Dorsolateral prefrontal cortex (tissue), 120 donors: ENCODE measurements at regions of chr20 and their contacts with region 1.

Region 1: DNA sequence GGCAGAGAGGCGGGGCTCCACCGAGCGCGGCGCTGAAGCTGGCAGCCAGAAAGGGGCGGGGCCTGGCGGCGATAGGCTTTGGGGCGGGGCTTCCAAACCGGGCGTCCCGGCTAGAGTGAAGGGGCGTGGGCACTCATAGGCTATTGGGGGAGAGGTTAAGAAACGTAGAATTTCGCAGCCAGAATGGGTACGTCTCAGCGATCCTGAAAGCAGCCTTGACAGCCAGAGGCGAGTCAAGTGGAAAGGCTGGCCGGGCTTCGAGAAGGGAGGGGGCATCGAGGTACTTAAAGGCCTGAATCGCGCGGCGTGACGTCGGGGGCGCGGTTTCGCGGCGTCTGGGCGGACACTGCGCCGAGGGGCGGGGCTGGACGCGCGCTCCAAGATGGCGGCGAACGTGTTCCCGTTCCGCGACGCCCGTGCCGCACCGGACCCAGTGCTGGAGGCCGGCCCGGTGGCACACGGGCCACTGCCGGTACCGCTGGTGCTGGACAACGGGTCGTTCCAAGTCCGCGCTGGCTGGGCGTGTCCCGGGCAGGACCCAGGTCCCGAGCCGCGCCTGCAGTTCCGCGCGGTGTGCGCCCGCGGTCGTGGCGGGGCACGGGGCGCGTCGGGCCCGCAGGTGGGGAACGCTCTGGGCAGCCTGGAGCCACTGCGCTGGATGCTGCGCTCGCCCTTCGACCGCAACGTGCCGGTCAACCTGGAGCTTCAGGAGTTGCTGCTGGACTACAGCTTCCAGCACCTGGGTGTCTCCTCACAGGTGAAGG is at the start of gene ACTR5:
- DNase-seq: peak; percentile 81 to 92 (median 89)
- H3K4me3 ChIP-seq: peak within 1 kb of the TSS; percentile 47 to 97 (median 89)
- H3K27ac ChIP-seq: peak within 1 kb of the TSS in 57 of 59 donors; percentile 16 to 96 (median 85)
- H3K27me3 ChIP-seq: peaks cover 0 to 5% (median 0%) of the 10 kb centered on the region in 45 donors
- CTCF ChIP-seq: peak in 15 of 56 donors; percentile 0 to 46 (median 28)
- total RNA-seq, gene ACTR5: 7.0 to 13.6 (median 9.9) TPM

Region 2: GRCh38 chr20:38406476-38406875 is 341.8 kb before region 1 on chr20:
- intact Hi-C with region 1: no loop called
- DNase-seq: peak in 1 of 10 donors; percentile 9
- H3K4me3 ChIP-seq: no peak overlapping the region
- H3K27ac ChIP-seq: peak overlapping the region in 27 of 59 donors; percentile 8 to 77 (median 54)
- H3K27me3 ChIP-seq: no peaks in the 10 kb centered on the region
- CTCF ChIP-seq: no peak

Region 3: DNA sequence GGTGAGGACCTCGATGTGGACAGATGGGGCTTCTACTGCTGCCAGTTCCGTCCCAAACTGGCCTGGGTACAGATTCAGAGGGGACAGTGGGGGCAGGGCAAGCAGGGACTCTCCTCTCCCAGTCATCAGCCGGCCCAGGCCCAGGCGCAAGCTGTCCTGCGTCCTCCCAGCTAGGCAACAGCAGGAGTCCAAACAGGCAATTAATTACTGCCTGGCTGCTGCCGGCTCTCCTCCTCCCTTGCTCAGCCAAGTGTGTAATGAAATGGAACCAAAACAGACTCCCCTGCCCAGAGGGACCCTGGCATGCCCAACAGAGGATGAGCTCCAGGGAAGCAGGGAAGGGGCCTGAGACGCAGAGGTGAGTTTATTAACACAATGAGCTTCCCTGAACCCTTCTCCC is 41.8 kb before region 1 on chr20:
- intact Hi-C with region 1: no loop called
- DNase-seq: no peak
- H3K4me3 ChIP-seq: no peak overlapping the region
- H3K27ac ChIP-seq: no peak overlapping the region
- H3K27me3 ChIP-seq: peaks cover 0 to 35% (median 6%) of the 10 kb centered on the region in 45 donors
- CTCF ChIP-seq: no peak

Region 4: GRCh38 chr20:38804682-38805501 is 56.6 kb after region 1 on chr20:
- intact Hi-C with region 1: loop called in 1 of 2 experiments (anchors 5 kb)
- DNase-seq: no peak
- H3K4me3 ChIP-seq: peak overlapping the region; percentile 54 to 97 (median 84)
- H3K27ac ChIP-seq: peak overlapping the region; percentile 69 to 98 (median 95)
- H3K27me3 ChIP-seq: peaks cover 0 to 7% (median 0%) of the 10 kb centered on the region in 45 donors
- CTCF ChIP-seq: no peak

Region 5: GRCh38 chr20:38893565-38894090 is 145.3 kb after region 1 on chr20:
- intact Hi-C with region 1: loop called in 1 of 2 experiments (anchors 5 kb)
- DNase-seq: peak; percentile 76 to 89 (median 82)
- H3K4me3 ChIP-seq: peak overlapping the region in 29 of 59 donors; percentile 3 to 39 (median 23)
- H3K27ac ChIP-seq: peak overlapping the region; percentile 58 to 100 (median 99)
- H3K27me3 ChIP-seq: no peaks in the 10 kb centered on the region
- CTCF ChIP-seq: peak; percentile 45 to 97 (median 93)

Region 6: DNA sequence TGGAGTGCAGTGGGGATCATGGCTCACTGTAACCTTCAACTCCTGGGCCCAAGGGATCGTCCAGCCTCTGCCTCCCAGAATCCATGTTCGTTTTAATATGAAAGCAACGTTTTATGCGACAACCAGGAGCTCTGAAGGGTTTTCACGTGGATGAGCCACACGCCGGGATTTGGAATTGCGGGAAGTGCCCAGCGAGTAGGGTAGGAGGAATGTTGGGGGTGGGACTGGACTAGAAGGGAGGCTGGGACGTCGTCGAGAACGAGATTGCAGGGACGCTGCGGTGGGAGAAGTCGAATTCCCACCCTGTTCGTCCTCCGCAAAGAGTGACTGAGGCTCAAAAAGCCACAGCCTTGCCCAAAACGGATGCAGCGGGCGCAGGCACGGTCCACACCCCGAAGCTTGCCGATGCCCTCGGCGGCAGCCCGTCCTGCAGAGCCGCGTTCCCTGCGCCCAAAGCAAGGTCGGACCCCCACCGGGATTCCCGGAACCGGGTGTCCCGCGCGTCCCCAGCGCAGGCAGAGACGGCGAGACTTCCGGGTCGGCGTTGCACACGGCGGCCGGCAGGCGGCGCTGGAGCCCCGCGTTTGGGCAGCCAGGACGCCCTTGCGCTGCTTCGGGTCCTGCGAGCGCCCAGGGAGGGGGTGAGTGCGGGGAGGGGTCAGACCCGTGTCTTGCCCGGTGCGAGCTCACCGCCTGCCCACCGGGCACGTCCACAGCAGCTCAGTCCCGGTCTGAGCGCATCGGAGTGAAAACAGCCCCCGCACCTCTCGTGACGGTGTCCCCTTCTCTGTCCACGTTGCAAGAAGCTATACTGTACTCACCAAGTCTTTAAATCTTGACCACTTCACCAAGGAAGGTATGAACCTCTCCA is 301.6 kb after region 1 on chr20:
- intact Hi-C with region 1: loop called in 1 of 2 experiments (anchors 10 kb)
- DNase-seq: peak; percentile 58 to 89 (median 72)
- H3K4me3 ChIP-seq: peak overlapping the region; percentile 39 to 91 (median 72)
- H3K27ac ChIP-seq: peak overlapping the region in 54 of 59 donors; percentile 6 to 91 (median 74)
- H3K27me3 ChIP-seq: no peaks in the 10 kb centered on the region
- CTCF ChIP-seq: peak; percentile 73 to 100 (median 98)